Activated CD4-positive, alpha-beta T cell treated with anti-CD3 and anti-CD28 coated beads for 36 hours (primary cell): ENCODE measurements at regions of chr4 and their contacts with region 1.

Region 1: DNA sequence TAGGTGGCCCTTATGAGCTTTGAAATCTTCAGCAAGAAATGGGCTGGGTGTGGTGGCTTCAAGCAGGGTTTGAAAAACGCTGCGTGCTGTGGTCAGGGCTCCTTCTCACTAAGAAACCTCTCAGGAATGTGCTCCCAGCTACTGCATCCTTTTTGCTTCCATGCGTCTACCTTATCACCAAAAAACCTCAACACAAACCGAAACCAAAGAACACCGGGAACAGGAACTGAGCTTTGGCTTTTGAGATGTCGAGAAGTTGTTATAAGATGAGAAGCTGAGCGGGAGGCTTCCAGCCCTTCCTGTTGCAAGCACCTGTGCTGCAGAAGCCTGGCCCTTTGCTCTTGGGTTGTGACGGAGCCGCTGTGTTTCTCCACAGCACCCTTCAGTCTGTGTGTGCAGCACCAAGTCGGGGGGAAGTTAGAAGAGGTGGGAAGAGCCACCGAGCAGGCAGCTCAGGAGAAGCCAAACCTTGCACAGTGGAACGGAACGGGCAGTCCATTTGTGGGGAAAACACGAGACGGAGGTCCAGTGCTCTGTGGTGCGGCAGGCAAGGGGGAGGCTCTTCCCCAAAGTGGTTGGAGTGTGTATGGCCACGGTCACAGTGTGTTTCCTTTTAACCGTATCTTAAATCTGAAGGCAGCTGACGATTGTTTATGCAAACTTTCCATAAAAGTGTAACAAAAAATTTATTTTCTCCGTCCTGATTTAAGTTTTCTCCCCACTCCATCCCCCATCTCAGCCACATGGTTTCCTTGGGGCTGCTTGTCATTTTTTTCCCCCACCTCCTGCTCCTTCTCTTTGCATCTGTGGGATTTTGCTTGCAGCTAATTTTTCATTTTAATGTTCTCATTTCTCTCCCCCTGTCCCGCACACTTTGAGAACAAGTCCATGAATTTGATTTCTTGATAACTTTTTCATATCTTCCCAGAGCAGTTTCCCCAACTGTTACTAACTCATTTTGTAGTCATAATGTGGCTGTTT is 123.6 kb downstream of the STOX2 start:
- DNase-seq: peak; percentile 46
- ATAC-seq: peak; percentile 72
- H3K4me3 Mint-ChIP-seq: peak overlapping the region; percentile 70
- H3K27ac Mint-ChIP-seq: peak overlapping the region; percentile 48
- H3K4me1 Mint-ChIP-seq: peaks cover 23% of the 10 kb centered on the region
- H3K27me3 Mint-ChIP-seq: peaks cover 14% of the 10 kb centered on the region

Region 2: DNA sequence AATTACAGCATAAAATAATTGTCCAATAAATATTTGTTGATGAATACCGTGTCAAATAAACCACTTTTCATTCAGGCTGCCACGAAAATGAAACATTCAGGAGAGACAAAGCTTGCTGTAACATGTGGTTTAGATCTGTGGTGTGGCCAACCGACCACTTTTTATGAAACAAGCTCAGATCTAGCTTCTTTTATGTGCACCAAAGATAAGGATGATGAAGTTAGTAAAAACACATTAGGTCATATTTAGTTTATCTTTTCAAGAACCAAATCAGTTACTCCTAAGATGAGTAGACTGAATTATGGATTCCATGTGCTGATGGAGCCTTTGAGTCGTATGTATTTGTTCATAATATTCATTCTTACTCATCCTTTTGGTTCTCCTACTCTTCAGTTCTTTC is 87.8 kb before region 1 on chr4:
- CTCF ChIA-PET with region 1: no interaction called
- POLR2A ChIA-PET with region 1: no interaction called
- intact Hi-C with region 1: no loop called
- DNase-seq: no peak
- ATAC-seq: peak; percentile 42
- H3K4me3 Mint-ChIP-seq: no peak overlapping the region
- H3K27ac Mint-ChIP-seq: no peak overlapping the region
- H3K4me1 Mint-ChIP-seq: no peaks in the 10 kb centered on the region
- H3K27me3 Mint-ChIP-seq: peaks cover 4% of the 10 kb centered on the region

Region 3: GRCh38 chr4:184016759-184017668 is 11.7 kb before region 1 on chr4:
- CTCF ChIA-PET with region 1: interaction called, 10 read pairs
- POLR2A ChIA-PET with region 1: no interaction called
- intact Hi-C with region 1: no loop called
- DNase-seq: no peak
- ATAC-seq: no peak
- H3K4me3 Mint-ChIP-seq: no peak overlapping the region
- H3K27ac Mint-ChIP-seq: no peak overlapping the region
- H3K4me1 Mint-ChIP-seq: peaks cover 6% of the 10 kb centered on the region
- H3K27me3 Mint-ChIP-seq: peaks cover 2% of the 10 kb centered on the region

Region 4: GRCh38 chr4:184039963-184040383 is 11.3 kb after region 1 on chr4:
- CTCF ChIA-PET with region 1: interaction called, 10 read pairs
- POLR2A ChIA-PET with region 1: no interaction called
- intact Hi-C with region 1: no loop called
- DNase-seq: peak; percentile 62
- ATAC-seq: peak; percentile 87
- H3K4me3 Mint-ChIP-seq: peak overlapping the region; percentile 51
- H3K27ac Mint-ChIP-seq: no peak overlapping the region
- H3K4me1 Mint-ChIP-seq: peaks cover 12% of the 10 kb centered on the region
- H3K27me3 Mint-ChIP-seq: peaks cover 16% of the 10 kb centered on the region